ENCODE measurements at regions of chr7 and their contacts with region 1.

Region 1: DNA sequence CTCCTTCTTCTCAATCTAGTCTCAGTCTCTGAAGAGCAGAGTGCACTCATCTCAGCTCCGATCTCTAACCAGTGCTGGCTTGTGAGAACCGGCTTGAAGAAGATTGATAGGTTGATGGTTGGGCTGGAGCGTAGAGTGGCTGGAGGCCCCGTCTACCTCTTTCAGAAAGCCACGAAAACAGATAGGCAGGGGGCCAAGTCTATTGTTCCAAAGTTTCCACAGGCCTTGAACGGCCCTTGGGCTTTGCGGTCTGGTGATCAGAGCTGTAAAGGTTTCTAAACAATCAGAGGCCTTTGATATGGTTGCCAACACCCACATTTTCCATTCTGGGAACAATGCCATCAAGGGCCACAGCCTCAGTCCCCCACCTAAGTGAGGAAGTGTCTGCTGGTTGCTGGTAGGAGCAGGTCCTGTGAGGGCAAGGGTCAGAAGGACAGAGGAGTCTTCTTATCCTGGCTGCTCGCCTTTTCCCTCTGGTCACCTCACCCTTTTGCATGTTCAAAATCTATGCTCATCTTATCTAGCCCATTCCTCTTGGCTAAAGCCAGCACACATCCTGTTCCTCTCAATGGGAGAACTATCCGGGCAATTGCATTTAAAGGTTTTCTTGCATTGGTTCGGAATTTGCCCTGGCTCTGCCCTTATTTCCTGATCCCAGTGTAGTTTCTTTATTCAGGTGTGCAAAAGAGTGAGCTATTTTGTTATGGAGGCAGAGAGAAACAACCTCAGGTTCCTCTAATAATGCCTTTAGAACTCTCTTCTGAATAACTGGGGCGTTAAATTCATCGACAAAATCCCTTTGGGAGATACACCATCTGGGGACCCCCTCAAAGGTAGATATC is 70.3 kb upstream of the KMT2E start:
- DNase-seq: peak; percentile 52
- CTCF ChIP-seq: no peak

Region 2: DNA sequence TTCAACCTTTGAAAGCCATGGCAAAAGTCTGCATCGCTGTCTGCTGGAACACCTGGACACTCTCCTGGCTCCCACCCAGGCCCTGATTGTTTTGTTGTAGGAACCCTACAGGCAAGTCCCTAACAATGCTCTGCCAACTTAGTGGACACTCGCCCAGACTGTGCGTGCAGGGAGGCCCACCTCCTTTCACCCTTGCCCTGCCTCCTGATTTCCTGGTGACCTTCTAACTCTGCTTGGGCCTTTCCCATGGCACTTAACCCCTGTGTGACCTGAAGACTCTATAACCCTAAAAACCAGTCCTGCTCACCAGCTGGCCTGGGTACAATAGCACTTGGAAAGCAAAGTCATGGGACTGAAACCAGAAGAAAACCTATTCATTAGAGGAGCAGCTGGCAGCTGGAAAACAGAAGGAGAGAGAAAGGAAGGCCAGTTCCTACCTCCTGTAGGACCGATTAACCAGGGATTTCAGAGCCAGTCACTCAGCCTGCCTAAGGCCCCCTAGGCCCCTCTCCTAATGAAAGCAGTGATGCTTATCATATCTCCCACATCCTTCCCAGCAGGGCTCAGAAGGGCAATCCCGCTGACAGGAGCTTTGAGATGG is 12.4 kb before region 1 on chr7:
- CTCF ChIA-PET with region 1: interaction called, 11 read pairs
- POLR2A ChIA-PET with region 1: interaction called, 23 read pairs
- DNase-seq: no peak
- CTCF ChIP-seq: no peak

Region 3: GRCh38 chr7:104956753-104957450 is 13.2 kb after region 1 on chr7:
- CTCF ChIA-PET with region 1: interaction called, 8 read pairs
- POLR2A ChIA-PET with region 1: interaction called, 11 read pairs
- DNase-seq: peak; percentile 61
- CTCF ChIP-seq: no peak

Region 4: GRCh38 chr7:105013221-105013815 is 69.6 kb after region 1 on chr7:
- CTCF ChIA-PET with region 1: interaction called, 4 read pairs
- POLR2A ChIA-PET with region 1: interaction called, 15 read pairs
- DNase-seq: peak; percentile 85
- CTCF ChIP-seq: peak; percentile 25

Measured in GM10248 (cell line).